ENCODE measurements at regions of chr14 and their contacts with region 1.

Region 1: DNA sequence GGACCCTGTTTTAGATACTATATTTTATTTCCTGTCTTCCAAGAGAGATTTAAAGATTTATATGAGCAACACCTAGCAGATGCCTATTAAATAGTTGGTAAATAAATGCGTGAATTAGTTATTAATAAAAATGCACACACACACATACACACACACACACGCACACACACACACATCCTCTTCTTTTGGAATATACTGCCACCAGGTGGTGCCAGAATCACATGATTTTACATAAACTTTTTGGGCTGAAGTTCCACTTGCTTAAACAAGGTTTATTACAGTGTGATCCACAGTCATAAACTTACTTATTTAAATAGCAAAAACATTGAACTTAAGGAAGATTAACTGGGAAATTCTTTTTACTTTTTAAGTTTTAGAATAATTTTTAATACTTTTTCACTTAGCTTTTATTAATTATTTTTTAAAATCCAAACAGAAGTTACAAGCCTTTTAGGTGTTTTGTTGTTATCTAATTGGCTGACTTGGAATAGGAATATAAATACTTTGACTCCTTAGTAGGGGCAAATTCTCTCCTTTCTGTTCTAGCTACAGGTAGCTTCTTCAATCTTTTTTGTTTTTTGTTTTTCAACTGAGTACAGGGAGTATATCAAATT is 17.5 kb downstream of the RAD51B start:
- DNase-seq: no peak
- CTCF ChIP-seq: peak; percentile 67

Region 2: DNA sequence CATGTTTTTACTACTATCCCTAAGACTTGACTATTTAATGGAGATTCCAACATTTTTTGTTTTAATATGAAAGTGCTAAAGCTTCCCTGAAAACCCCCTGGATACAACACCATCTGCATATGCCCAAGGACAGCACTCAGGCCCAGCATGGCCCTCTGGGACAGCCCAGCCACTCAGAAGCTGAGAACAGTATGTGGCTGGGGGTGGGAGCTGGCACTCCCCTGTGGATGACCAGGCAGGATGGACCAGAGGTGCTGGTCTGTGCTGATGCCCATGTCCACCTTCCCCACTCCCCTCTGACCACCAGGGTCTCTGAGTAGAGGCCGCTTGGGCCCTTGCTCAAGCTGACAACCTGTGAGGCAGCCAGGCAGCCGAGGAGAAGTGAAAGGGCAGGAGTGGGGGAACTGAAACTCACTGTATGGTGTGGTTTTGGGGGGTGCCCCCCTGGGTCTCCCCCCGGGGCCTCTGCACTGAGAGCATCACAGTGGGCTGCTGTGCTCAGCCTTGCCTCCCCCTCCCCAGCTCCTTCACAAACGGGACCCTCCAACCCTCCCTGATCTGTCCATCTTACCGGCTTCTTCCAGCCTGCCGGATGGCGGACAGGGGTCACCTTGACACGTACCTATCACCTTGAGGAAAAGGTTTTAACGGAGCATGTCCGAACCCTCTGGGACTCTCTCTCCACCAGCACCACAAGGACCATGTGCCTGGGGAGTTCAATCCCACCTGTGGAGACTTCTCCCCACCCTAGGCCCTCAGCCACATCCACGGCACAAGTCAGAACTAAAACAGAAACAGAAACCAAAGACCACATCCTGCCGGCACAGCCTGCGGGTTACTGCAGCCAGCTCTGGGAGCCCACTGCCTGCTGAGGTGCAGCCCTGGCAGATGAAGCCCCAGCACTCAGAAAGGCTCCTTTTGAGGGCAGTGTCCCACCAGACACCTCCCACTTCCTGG is 348.9 kb before region 1 on chr14 and contains the start of gene TMEM229B:
- CTCF ChIA-PET with region 1: no interaction called
- POLR2A ChIA-PET with region 1: no interaction called
- DNase-seq: peak; percentile 92
- CTCF ChIP-seq: no peak

Region 3: GRCh38 chr14:67749341-67750084 is 87.6 kb before region 1 on chr14:
- CTCF ChIA-PET with region 1: no interaction called
- POLR2A ChIA-PET with region 1: no interaction called
- DNase-seq: no peak
- CTCF ChIP-seq: no peak

Region 4: DNA sequence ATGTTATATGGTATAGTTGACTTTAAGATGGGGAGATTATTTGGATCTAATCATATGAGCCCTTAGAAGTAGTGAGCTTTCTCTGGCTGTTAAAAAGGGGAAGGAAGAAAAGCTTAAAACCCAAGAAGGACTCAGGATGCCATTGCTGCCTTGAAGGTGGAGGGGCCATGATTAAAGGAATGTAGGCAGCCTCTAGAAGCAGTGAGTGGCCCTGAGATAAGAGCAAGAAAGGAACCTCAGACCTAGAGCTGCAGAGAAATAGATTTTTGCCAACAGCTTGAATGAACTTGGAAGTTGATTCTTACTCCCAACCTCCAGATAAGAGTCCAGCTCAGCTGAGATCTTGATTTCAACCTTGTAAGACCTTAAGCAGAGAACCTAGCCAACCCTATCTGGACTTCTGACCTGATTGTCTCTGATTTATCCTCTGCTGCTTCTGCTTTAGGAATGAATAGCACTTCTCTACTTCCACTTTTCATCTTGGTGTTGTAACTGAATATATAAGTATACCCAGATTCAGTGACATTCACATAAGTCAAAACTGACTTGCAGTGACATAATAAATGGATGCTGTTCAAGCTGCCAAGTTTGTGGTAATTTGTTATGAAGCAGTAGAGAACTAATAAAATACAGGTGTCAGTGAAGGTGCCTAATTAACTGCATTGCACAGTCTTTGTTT is 15.9 kb after region 1 on chr14:
- CTCF ChIA-PET with region 1: interaction called, 10 read pairs
- POLR2A ChIA-PET with region 1: no interaction called
- DNase-seq: peak; percentile 31
- CTCF ChIP-seq: no peak

Region 5: DNA sequence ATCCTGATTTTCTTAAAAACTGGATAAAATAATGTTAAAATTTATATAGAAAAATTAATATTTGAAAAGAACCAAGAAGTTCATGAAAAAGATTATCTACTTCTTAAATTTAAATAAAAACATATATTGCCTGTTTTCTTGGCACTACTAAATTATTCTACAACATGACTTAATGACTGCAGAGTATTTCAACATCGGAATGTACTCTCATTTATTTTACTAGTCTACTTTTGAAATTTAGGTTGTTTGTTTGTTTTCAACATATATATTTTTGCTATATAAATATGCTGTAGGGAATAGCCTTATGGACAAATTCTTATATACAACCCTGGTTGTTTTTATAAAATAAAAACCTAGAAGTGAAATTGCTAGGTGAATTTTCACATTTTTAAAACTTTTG is 214.0 kb after region 1 on chr14:
- CTCF ChIA-PET with region 1: no interaction called
- POLR2A ChIA-PET with region 1: no interaction called
- DNase-seq: no peak
- CTCF ChIP-seq: no peak

Measured in GM10248 (cell line).